Gastrocnemius medialis (tissue), 4 donors: ENCODE measurements at regions of chr20 and their contacts with region 1.

Region 1: DNA sequence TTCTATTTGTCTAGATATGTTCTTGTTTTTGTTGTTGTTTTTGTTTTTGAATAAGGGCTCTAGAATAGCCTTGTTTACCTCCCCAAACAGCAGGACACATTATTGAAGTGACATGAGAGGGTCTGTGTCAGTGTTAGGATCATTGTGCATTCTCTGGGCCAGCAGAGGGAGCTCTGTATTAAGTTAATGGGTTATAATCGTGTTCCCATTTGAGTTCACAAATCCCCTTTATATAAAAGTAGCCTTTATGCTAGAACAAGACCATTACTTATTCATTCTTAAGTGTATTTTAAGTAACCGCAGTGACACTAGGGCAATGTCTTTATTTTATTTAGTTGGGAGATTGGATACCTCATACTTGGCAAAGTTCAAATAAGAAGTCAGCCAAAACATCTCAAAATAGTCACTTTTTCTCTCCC is 44.8 kb downstream of the STK4 start:
- DNase-seq: peak; percentile 22
- ATAC-seq: peak; percentile 70 to 76
- H3K4me3 ChIP-seq: no peak overlapping the region
- H3K27ac ChIP-seq: no peak overlapping the region
- H3K4me1 ChIP-seq: peaks cover 3% of the 10 kb centered on the region in 2 donors
- H3K27me3 ChIP-seq: no peaks in the 10 kb centered on the region
- CTCF ChIP-seq: peak; percentile 14 to 71 (median 51)
- POLR2A ChIP-seq: no peak

Region 2: GRCh38 chr20:45041464-45042337 is 30.6 kb after region 1 on chr20:
- in situ Hi-C with region 1: no loop called
- intact Hi-C with region 1: no loop called
- DNase-seq: no peak
- ATAC-seq: no peak
- H3K4me3 ChIP-seq: no peak overlapping the region
- H3K27ac ChIP-seq: no peak overlapping the region
- H3K4me1 ChIP-seq: peaks cover 17 to 19% of the 10 kb centered on the region in 2 donors
- H3K27me3 ChIP-seq: no peaks in the 10 kb centered on the region
- CTCF ChIP-seq: no peak
- POLR2A ChIP-seq: no peak

Region 3: GRCh38 chr20:45095753-45096371 is 84.7 kb after region 1 on chr20:
- in situ Hi-C with region 1: no loop called
- intact Hi-C with region 1: loop called (anchors 10 kb)
- DNase-seq: peak; percentile 10 to 22
- ATAC-seq: peak; percentile 20 to 81
- H3K4me3 ChIP-seq: no peak overlapping the region
- H3K27ac ChIP-seq: no peak overlapping the region
- H3K4me1 ChIP-seq: no peaks in the 10 kb centered on the region
- H3K27me3 ChIP-seq: peaks cover 43 to 48% (median 43%) of the 10 kb centered on the region in 3 donors
- CTCF ChIP-seq: peak; percentile 39 to 72 (median 50)
- POLR2A ChIP-seq: no peak

Region 4: GRCh38 chr20:45114465-45115385 is 103.6 kb after region 1 on chr20 and contains the start of gene WFDC5:
- in situ Hi-C with region 1: no loop called
- intact Hi-C with region 1: no loop called
- DNase-seq: no peak
- ATAC-seq: no peak
- H3K4me3 ChIP-seq: no peak within 1 kb of the TSS
- H3K27ac ChIP-seq: no peak within 1 kb of the TSS
- H3K4me1 ChIP-seq: no peaks in the 10 kb centered on the region
- H3K27me3 ChIP-seq: peaks cover 0 to 11% (median 0%) of the 10 kb centered on the region in 3 donors
- CTCF ChIP-seq: no peak
- POLR2A ChIP-seq: no peak
- total RNA-seq, gene WFDC5: not detected

Region 5: GRCh38 chr20:45181639-45182038 is 170.5 kb after region 1 on chr20:
- in situ Hi-C with region 1: no loop called
- intact Hi-C with region 1: no loop called
- DNase-seq: no peak
- ATAC-seq: no peak
- H3K4me3 ChIP-seq: no peak overlapping the region
- H3K27ac ChIP-seq: no peak overlapping the region
- H3K4me1 ChIP-seq: no peaks in the 10 kb centered on the region
- H3K27me3 ChIP-seq: no peaks in the 10 kb centered on the region
- CTCF ChIP-seq: no peak
- POLR2A ChIP-seq: no peak

Region 6: GRCh38 chr20:45392733-45393132 is 381.6 kb after region 1 on chr20:
- in situ Hi-C with region 1: no loop called
- intact Hi-C with region 1: no loop called
- DNase-seq: no peak
- ATAC-seq: no peak
- H3K4me3 ChIP-seq: no peak overlapping the region
- H3K27ac ChIP-seq: no peak overlapping the region
- H3K4me1 ChIP-seq: no peaks in the 10 kb centered on the region
- H3K27me3 ChIP-seq: no peaks in the 10 kb centered on the region
- CTCF ChIP-seq: no peak
- POLR2A ChIP-seq: no peak